ENCODE measurements at regions of chr17 and their contacts with region 1.

Region 1: GRCh38 chr17:13776027-13776588 is 174.4 kb upstream of the HS3ST3A1 start:
- DNase-seq: peak in 1 of 2 donors; percentile 46
- ATAC-seq: peak; percentile 85 to 91
- H3K4me3 ChIP-seq: no peak overlapping the region
- H3K27ac ChIP-seq: peak overlapping the region in 1 of 4 donors; percentile 52
- H3K4me1 ChIP-seq: no peaks in the 10 kb centered on the region
- H3K27me3 ChIP-seq: no peaks in the 10 kb centered on the region
- CTCF ChIP-seq: no peak
- POLR2A ChIP-seq: no peak

Region 2: DNA sequence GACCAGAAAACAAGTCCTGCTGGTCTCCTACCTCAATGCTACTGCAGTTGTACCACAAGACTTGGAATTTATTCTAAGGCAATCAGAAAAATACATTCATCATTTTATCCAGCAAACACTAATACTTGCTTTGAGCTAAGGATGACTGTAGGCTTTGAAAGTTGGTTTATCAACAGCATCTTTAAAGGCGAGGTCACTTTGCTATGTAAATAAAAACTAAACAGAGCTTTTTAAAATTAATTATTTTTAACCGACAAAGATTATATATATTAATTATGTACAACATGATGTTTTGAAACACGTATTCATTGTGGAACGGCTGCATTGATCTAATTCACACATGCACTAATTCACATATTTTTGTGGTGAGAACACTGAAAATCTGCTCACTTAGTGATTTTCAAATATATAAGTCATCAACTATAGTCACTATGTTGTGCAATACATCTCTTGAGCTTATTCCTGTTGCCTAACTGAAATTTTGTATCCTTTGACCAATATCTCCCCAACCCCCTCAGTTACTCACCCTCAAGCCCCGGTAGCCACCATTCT is 48.5 kb before region 1 on chr17:
- in situ Hi-C with region 1: no loop called
- intact Hi-C with region 1: loop called (anchors 10 kb)
- DNase-seq: no peak
- ATAC-seq: no peak
- H3K4me3 ChIP-seq: no peak overlapping the region
- H3K27ac ChIP-seq: no peak overlapping the region
- H3K4me1 ChIP-seq: no peaks in the 10 kb centered on the region
- H3K27me3 ChIP-seq: peaks cover 0 to 3% (median 0%) of the 10 kb centered on the region in 3 donors
- CTCF ChIP-seq: no peak
- POLR2A ChIP-seq: no peak

Region 3: GRCh38 chr17:14118951-14119350 is 342.8 kb after region 1 on chr17:
- in situ Hi-C with region 1: no loop called
- intact Hi-C with region 1: no loop called
- DNase-seq: no peak
- ATAC-seq: no peak
- H3K4me3 ChIP-seq: no peak overlapping the region
- H3K27ac ChIP-seq: no peak overlapping the region
- H3K4me1 ChIP-seq: peaks cover 12 to 17% of the 10 kb centered on the region in 2 donors
- H3K27me3 ChIP-seq: no peaks in the 10 kb centered on the region
- CTCF ChIP-seq: no peak
- POLR2A ChIP-seq: no peak

Measured in gastrocnemius medialis (tissue), 4 donors.